K562 (cell line): ENCODE measurements at regions of chr12 and their contacts with region 1.

Region 1: DNA sequence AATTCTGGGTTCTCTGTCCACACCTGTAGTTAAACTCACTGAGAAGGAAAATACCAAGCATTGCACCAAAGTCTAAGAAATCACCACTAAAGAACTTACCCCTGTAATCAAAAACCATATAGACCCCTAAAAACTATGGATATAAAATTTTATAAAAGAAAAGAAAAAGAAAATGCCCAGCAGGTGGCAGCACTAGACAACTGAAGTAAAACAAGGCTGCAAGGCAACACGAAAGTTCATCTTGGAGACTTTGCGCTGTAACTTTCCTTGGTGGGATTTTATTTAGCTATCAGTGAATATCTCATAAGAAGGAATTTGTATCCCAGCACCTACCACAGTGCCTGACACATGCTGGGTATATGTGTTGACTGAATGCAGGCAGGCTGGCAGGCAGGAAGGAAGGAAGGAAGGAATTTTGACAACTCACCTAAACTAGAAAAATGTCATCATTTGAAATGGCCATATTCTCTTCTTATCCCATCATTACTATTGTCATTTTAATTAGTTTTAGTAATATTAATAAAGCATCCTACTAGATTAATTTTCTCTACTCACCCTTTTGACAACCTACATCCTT is 68.2 kb upstream of the ETV6 start:
- DNase-seq: peak; percentile 22 to 64 (median 36)
- ATAC-seq: no peak
- H3K4me3 ChIP-seq: no peak overlapping the region
- H3K27ac ChIP-seq: no peak overlapping the region
- H3K4me1 ChIP-seq: no peaks in the 10 kb centered on the region
- H3K27me3 ChIP-seq: no peaks in the 10 kb centered on the region
- CTCF ChIP-seq: peak; percentile 28 to 64 (median 39); a peak in 3 of 6 replicates
- EP300 ChIP-seq: no peak
- POLR2A ChIP-seq: no peak
- RAD21 ChIP-seq: peak; percentile 79 to 82

Region 2: DNA sequence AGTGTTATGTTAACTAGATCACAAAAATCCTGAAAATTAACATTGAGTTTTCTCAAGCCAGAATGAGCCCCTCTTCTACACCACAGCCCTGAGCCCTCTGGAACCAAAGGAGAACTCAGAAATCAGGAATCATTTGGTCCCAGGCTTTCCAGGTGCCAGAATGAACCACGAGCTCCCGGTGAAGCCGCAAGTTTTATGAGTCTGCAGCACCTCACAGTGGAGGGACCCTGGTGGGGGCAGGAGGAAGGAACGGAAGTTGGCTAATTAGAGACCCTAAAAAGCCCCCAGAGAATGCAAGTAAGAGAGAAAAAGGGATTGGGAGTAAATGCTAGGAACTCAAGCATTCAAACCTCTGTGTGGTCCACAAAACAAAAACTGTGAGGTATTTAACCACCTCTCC is 436.5 kb after region 1 on chr12:
- CTCF ChIA-PET with region 1: interaction called, 3 read pairs
- POLR2A ChIA-PET with region 1: no interaction called
- in situ Hi-C with region 1: loop called (anchors 5 kb)
- intact Hi-C with region 1: no loop called
- DNase-seq: peak in 1 of 4 experiments; percentile 9
- ATAC-seq: no peak
- H3K4me3 ChIP-seq: no peak overlapping the region
- H3K27ac ChIP-seq: no peak overlapping the region
- H3K4me1 ChIP-seq: no peaks in the 10 kb centered on the region; a peak in 1 of 5 replicates
- H3K27me3 ChIP-seq: peaks cover 5 to 22% of the 10 kb centered on the region in 2 experiments; a peak in 4 of 5 replicates
- CTCF ChIP-seq: peak in 2 of 3 experiments; percentile 13 to 38; a peak in 2 of 6 replicates
- EP300 ChIP-seq: no peak
- POLR2A ChIP-seq: no peak
- RAD21 ChIP-seq: peak in 1 of 2 experiments; percentile 45; a peak in 2 of 4 replicates

Region 3: GRCh38 chr12:12032851-12033588 is 451.8 kb after region 1 on chr12:
- CTCF ChIA-PET with region 1: interaction called, 36 read pairs
- POLR2A ChIA-PET with region 1: no interaction called
- in situ Hi-C with region 1: no loop called
- intact Hi-C with region 1: loop called (anchors 1 kb)
- DNase-seq: peak; percentile 61 to 77 (median 70)
- ATAC-seq: peak; percentile 61
- H3K4me3 ChIP-seq: no peak overlapping the region
- H3K27ac ChIP-seq: no peak overlapping the region
- H3K4me1 ChIP-seq: no peaks in the 10 kb centered on the region
- H3K27me3 ChIP-seq: no peaks in the 10 kb centered on the region; a peak in 1 of 5 replicates
- CTCF ChIP-seq: peak; percentile 73 to 85 (median 81)
- EP300 ChIP-seq: no peak
- POLR2A ChIP-seq: no peak
- RAD21 ChIP-seq: peak; percentile 90 to 91